ENCODE measurements at regions of chr6 and their contacts with region 1.

Region 1: GRCh38 chr6:5214570-5215052 is 46.1 kb downstream of the LYRM4 start:
- DNase-seq: peak; percentile 58
- H3K4me3 Mint-ChIP-seq: no peak overlapping the region
- H3K27ac Mint-ChIP-seq: no peak overlapping the region
- H3K4me1 Mint-ChIP-seq: peaks cover 4% of the 10 kb centered on the region
- H3K27me3 Mint-ChIP-seq: no peaks in the 10 kb centered on the region

Region 2: GRCh38 chr6:3766214-3766613 is 1448.4 kb before region 1 on chr6:
- CTCF ChIA-PET with region 1: no interaction called
- POLR2A ChIA-PET with region 1: no interaction called
- intact Hi-C with region 1: no loop called
- DNase-seq: no peak
- H3K4me3 Mint-ChIP-seq: no peak overlapping the region
- H3K27ac Mint-ChIP-seq: no peak overlapping the region
- H3K4me1 Mint-ChIP-seq: peaks cover 8% of the 10 kb centered on the region
- H3K27me3 Mint-ChIP-seq: peaks cover 21% of the 10 kb centered on the region

Region 3: GRCh38 chr6:5246141-5247097 is 31.8 kb after region 1 on chr6:
- CTCF ChIA-PET with region 1: interaction called, 3 read pairs
- POLR2A ChIA-PET with region 1: no interaction called
- intact Hi-C with region 1: loop called (anchors 5 kb)
- DNase-seq: no peak
- H3K4me3 Mint-ChIP-seq: no peak overlapping the region
- H3K27ac Mint-ChIP-seq: no peak overlapping the region
- H3K4me1 Mint-ChIP-seq: peaks cover 2% of the 10 kb centered on the region
- H3K27me3 Mint-ChIP-seq: no peaks in the 10 kb centered on the region

Region 4: DNA sequence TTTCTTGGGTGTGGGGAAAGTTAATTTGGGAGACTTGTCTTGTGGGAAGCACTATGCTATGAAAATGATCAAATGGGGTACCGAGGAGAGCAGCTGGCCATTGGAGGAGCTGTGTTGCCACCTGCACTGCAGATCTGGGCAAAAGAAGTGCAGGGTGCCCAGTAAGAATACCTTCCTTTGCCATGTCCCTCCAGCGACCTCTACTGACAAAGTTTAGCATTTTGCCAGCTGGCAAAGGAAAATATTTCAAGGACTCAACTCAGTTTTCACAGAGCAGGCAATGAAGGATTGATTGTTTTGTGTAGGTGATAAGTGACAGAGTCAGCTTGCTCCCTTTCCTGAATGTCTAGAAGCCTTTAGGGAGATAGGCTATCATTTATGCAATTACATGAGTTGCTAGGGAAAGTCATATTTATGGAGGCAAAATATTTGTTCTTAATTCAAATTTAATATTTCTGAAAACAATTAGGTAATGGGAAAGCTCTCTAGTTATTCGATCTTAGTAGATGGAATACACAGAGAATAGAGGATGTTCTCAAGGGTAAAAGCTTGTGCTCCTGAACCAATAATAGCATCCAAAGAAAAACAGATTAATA is 165.1 kb after region 1 on chr6:
- CTCF ChIA-PET with region 1: interaction called, 5 read pairs
- POLR2A ChIA-PET with region 1: no interaction called
- intact Hi-C with region 1: loop called (anchors 1 kb)
- DNase-seq: peak; percentile 43
- H3K4me3 Mint-ChIP-seq: no peak overlapping the region
- H3K27ac Mint-ChIP-seq: no peak overlapping the region
- H3K4me1 Mint-ChIP-seq: no peaks in the 10 kb centered on the region
- H3K27me3 Mint-ChIP-seq: no peaks in the 10 kb centered on the region